GM12878 (cell line): ENCODE measurements at regions of chr7 and their contacts with region 1.

Region 1: GRCh38 chr7:74101061-74101681 is 17.6 kb downstream of the LIMK1 start:
- DNase-seq: peak; percentile 60
- ATAC-seq: peak; percentile 93
- H3K4me3 ChIP-seq: peak overlapping the region; percentile 33; the same call in 1 of the 2 replicates
- H3K27ac ChIP-seq: peak overlapping the region; percentile 79
- H3K4me1 ChIP-seq: peaks cover 22% of the 10 kb centered on the region
- H3K27me3 ChIP-seq: no peaks in the 10 kb centered on the region
- CTCF ChIP-seq: no peak
- EP300 ChIP-seq: peak in 1 of 2 experiments; percentile 53; a peak in 1 of 4 replicates
- POLR2A ChIP-seq: no peak
- RAD21 ChIP-seq: no peak

Region 2: GRCh38 chr7:74083117-74083876 is 17.9 kb before region 1 on chr7 and contains the start of gene LIMK1:
- CTCF ChIA-PET with region 1: interaction called, 4 read pairs
- POLR2A ChIA-PET with region 1: interaction called, 18 read pairs
- RAD21 ChIA-PET with region 1: interaction called, 12 read pairs
- SMC1A ChIA-PET with region 1: interaction called, 10 read pairs
- in situ Hi-C with region 1: no loop called
- intact Hi-C with region 1: no loop called
- DNase-seq: no peak
- ATAC-seq: peak; percentile 81
- H3K4me3 ChIP-seq: peak within 1 kb of the TSS; percentile 94
- H3K27ac ChIP-seq: peak within 1 kb of the TSS; percentile 63
- H3K4me1 ChIP-seq: peaks cover 13% of the 10 kb centered on the region
- H3K27me3 ChIP-seq: no peaks in the 10 kb centered on the region
- CTCF ChIP-seq: no peak
- EP300 ChIP-seq: no peak
- POLR2A ChIP-seq: peak; percentile 65
- RAD21 ChIP-seq: no peak
- polyA plus RNA-seq, gene LIMK1: 0.71 to 0.77 TPM